HEK293 (cell line): ENCODE measurements at regions of chr9 and their contacts with region 1.

Region 1: DNA sequence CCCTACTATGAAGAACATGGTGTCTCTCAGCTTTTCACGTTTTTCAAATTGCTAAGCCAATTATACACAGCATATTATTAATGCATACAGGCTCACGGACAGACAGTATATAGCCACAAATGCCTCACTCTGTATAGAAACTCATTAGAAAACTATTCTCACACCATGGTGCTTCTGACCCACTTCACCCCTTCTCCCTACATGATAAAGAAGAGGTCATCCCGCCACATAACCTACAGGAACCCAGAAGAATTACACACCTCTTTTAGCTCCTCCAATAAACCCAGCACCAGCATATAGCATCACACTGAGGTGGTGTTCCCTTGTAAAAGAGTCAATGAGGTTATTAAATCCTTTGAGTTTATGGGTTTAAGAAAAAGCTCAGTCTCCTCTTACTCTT is 5.6 kb downstream of the TLE1 start:
- H3K4me3 ChIP-seq: no peak overlapping the region
- H3K27ac ChIP-seq: no peak overlapping the region
- H3K4me1 ChIP-seq: peaks cover 11% of the 10 kb centered on the region; the same call in 1 of the 2 replicates
- CTCF ChIP-seq: no peak

Region 2: GRCh38 chr9:81513059-81513458 is 170.6 kb before region 1 on chr9:
- CTCF ChIA-PET with region 1: no interaction called
- POLR2A ChIA-PET with region 1: no interaction called
- H3K4me3 ChIP-seq: no peak overlapping the region
- H3K27ac ChIP-seq: no peak overlapping the region
- H3K4me1 ChIP-seq: 0 out of 2 replicates have a peak, but pooled peaks cover under 1% of the 10 kb centered on the region
- CTCF ChIP-seq: no peak

Region 3: GRCh38 chr9:81673310-81673709 is 10.4 kb before region 1 on chr9:
- CTCF ChIA-PET with region 1: interaction called, 4 read pairs
- POLR2A ChIA-PET with region 1: interaction called, 10 read pairs
- H3K4me3 ChIP-seq: no peak overlapping the region
- H3K27ac ChIP-seq: no peak overlapping the region
- H3K4me1 ChIP-seq: peaks cover 12% of the 10 kb centered on the region
- CTCF ChIP-seq: no peak